WTC11 (cell line): ENCODE measurements at regions of chr20 and their contacts with region 1.

Region 1: DNA sequence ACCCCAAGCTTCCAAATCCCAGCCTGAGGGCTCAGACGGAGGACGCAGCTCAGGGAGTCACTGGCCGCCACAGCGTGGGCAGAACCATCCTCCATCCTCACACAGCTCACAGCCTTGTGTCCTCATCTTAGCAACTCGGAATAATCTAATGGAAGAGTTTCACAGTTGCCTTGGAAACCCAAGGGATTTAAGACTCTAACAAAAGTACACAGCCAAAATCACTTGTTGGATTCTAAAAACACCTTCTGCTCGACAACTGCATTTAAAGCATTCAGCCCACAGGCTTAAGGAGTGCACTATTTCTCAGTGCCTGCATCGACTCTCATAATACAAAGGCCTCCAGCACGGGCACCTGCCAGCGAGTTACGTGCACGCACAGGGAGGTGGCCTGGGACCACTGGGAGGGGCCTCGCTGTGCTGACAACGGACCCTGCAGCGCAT is 45.4 kb downstream of the ZBTB46 start:
- DNase-seq: no peak
- ATAC-seq: no peak
- H3K4me3 Mint-ChIP-seq: no peak overlapping the region
- H3K27ac Mint-ChIP-seq: peak overlapping the region; percentile 63; the same call in 1 of the 2 replicates
- H3K4me1 Mint-ChIP-seq: no peaks in the 10 kb centered on the region
- H3K27me3 Mint-ChIP-seq: no peaks in the 10 kb centered on the region
- CTCF ChIP-seq: no peak

Region 2: GRCh38 chr20:63739130-63740069 is 46.3 kb before region 1 on chr20 and contains the start of gene SLC2A4RG:
- CTCF ChIA-PET with region 1: interaction called, 11 read pairs
- POLR2A ChIA-PET with region 1: no interaction called
- DNase-seq: peak; percentile 58
- ATAC-seq: peak; percentile 61
- H3K4me3 Mint-ChIP-seq: peak within 1 kb of the TSS; percentile 60
- H3K27ac Mint-ChIP-seq: no peak within 1 kb of the TSS
- H3K4me1 Mint-ChIP-seq: no peaks in the 10 kb centered on the region
- H3K27me3 Mint-ChIP-seq: no peaks in the 10 kb centered on the region
- CTCF ChIP-seq: no peak
- total RNA-seq, gene SLC2A4RG: 41.6 to 47.2 TPM (median 43.3 TPM) in 3 replicates

Region 3: DNA sequence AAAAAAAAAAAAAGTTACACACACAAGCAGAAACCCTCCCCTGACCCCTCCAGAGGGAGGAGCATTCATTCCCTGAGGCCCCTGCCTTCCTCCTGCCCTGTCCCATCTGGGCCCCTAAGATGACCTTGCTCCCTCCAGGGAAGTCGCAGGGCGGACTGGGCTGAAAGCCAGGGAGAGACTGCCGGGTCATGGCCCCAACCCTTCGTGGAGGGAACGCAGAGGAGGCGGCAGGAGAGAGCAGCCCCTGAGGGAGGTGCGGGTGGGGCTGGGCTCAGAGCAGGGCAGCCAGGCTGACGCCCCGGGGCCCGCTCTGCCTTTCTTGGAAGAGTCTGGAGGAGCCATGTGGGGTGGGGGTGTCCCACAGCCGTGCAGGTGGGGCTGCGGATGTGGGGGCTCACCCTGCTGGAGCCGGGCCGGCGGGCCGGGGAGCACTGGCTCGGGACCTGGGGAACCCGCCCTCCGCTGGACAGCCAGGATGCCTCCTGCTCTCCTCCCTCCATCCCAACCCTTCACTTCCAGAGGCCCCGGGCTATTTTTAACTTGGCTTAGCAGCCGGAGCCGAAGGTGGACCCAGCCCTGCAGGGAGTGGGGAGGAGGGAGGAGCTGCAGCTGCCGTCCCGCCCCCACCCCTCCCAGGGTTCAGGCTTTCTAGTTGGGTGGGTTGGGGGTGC is 60.6 kb after region 1 on chr20:
- CTCF ChIA-PET with region 1: interaction called, 11 read pairs
- POLR2A ChIA-PET with region 1: no interaction called
- DNase-seq: peak; percentile 70
- ATAC-seq: peak; percentile 65
- H3K4me3 Mint-ChIP-seq: peak overlapping the region; percentile 75
- H3K27ac Mint-ChIP-seq: peak overlapping the region; percentile 88
- H3K4me1 Mint-ChIP-seq: peaks cover 24% of the 10 kb centered on the region
- H3K27me3 Mint-ChIP-seq: no peaks in the 10 kb centered on the region; the same call in none of the 2 replicates
- CTCF ChIP-seq: no peak

Region 4: GRCh38 chr20:63858393-63859165 is 72.9 kb after region 1 on chr20:
- CTCF ChIA-PET with region 1: interaction called, 16 read pairs
- POLR2A ChIA-PET with region 1: no interaction called
- DNase-seq: no peak
- ATAC-seq: peak; percentile 33
- H3K4me3 Mint-ChIP-seq: peak overlapping the region; percentile 43
- H3K27ac Mint-ChIP-seq: peak overlapping the region; percentile 86
- H3K4me1 Mint-ChIP-seq: peaks cover 47% of the 10 kb centered on the region
- H3K27me3 Mint-ChIP-seq: peaks cover 9% of the 10 kb centered on the region
- CTCF ChIP-seq: no peak

Region 5: GRCh38 chr20:63864847-63865640 is 79.3 kb after region 1 on chr20 and contains the start of gene TPD52L2:
- CTCF ChIA-PET with region 1: interaction called, 16 read pairs
- POLR2A ChIA-PET with region 1: interaction called, 4 read pairs
- DNase-seq: peak; percentile 99
- ATAC-seq: peak; percentile 94
- H3K4me3 Mint-ChIP-seq: peak within 1 kb of the TSS; percentile 94
- H3K27ac Mint-ChIP-seq: peak within 1 kb of the TSS; percentile 87
- H3K4me1 Mint-ChIP-seq: peaks cover 27% of the 10 kb centered on the region
- H3K27me3 Mint-ChIP-seq: no peaks in the 10 kb centered on the region
- CTCF ChIP-seq: no peak
- total RNA-seq, gene TPD52L2: 80.8 to 87.2 TPM (median 85.6 TPM) in 3 replicates